ENCODE measurements at regions of chr9 and their contacts with region 1.

Region 1: DNA sequence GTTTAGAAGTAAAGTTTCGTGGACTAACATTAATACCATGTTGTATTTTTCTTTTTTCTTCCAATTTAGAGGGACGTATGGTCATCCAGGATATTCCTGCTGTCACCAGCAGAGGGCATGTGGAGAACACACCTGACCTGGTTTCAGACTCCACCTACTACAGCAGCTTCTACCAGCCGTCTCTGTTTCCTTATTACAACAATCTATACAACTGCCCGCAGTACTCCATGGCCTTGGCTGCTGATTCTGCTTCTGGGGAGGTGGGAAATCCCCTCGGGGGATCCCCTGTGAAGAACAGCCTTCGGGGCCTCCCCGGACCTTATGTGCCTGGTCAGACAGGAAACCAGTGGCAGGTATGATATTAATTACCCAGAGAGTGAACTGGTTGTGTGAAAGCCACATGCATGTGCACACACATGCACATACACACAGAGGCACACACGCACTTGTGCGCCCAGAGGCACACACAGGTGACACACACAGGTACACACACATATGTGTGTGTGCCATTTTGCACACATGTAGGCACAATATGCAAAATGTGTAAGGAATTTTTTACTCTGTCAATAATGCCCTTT is 52.4 kb downstream of the DMRT1 start:
- DNase-seq: peak in 5 of 6 donors; percentile 42 to 72 (median 62)
- ATAC-seq: peak; percentile 98 to 100 (median 99)
- H3K4me3 ChIP-seq: no peak overlapping the region
- H3K27ac ChIP-seq: no peak overlapping the region
- H3K4me1 ChIP-seq: peaks cover 0 to 3% (median 0%) of the 10 kb centered on the region in 3 donors
- H3K27me3 ChIP-seq: no peaks in the 10 kb centered on the region
- CTCF ChIP-seq: peak; percentile 47 to 73 (median 68)

Region 2: GRCh38 chr9:744790-745484 is 149.0 kb before region 1 on chr9:
- intact Hi-C with region 1: no loop called
- DNase-seq: peak; percentile 77 to 95 (median 92)
- ATAC-seq: peak; percentile 94 to 97 (median 96)
- H3K4me3 ChIP-seq: no peak overlapping the region
- H3K27ac ChIP-seq: peak overlapping the region; percentile 31 to 75 (median 60)
- H3K4me1 ChIP-seq: peaks cover 19 to 38% (median 27%) of the 10 kb centered on the region in 3 donors
- H3K27me3 ChIP-seq: no peaks in the 10 kb centered on the region
- CTCF ChIP-seq: no peak

Region 3: DNA sequence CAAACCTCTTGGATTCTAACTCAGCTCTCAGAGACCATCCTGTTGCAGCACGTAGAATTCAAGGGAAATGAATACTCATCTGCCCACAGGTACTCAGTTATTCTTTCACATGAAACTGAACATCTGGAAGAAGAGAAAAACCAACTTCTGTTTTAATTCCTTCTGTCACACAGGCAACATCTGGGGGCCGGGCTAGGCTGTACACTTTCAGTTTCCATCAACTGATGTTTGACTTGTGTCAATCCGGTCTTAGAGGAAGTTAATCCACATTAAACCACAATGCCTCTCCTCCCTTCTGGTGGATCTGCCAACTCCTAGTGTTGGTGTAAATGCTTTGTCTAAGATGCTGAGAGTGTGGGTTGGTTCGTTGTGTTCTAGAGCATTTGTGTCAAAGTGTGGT is 100.1 kb after region 1 on chr9:
- intact Hi-C with region 1: loop called in 1 of 3 experiments (anchors 10 kb)
- DNase-seq: no peak
- ATAC-seq: no peak
- H3K4me3 ChIP-seq: no peak overlapping the region
- H3K27ac ChIP-seq: no peak overlapping the region
- H3K4me1 ChIP-seq: no peaks in the 10 kb centered on the region
- H3K27me3 ChIP-seq: peaks cover 0 to 3% (median 0%) of the 10 kb centered on the region in 4 donors
- CTCF ChIP-seq: no peak

Region 4: DNA sequence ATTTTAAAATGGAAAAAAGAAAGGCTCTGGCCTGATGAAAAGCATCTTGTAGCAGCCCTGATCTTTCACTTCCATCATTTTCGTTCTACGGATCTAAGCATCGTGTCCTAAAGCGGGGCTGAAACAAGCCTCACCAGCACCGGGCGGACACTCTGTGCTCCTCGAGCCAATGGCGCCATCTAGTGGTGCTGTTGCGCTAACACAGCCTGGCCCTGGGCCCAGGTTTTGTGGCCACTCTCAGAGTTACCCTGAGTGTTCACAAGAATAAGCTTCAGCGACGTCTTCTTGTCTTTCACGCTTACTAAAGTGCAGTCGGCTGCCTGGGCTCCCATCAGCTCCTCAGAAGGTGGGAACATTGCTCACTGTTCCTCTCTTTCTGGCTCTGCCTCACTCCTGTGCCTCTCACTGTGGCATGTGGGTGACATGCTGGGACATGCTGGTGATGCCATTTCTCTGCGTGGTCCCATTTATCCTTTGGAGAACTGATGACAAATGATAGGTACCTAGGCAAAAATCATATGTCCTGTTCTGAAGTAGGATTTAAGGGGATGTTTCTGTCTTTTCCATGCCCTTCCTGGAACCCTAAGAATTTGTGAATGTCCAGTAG is 115.3 kb after region 1 on chr9:
- intact Hi-C with region 1: loop called in 2 of 3 experiments (anchors 5 to 10 kb)
- DNase-seq: peak; percentile 65 to 95 (median 89)
- ATAC-seq: peak; percentile 96 to 99 (median 98)
- H3K4me3 ChIP-seq: no peak overlapping the region
- H3K27ac ChIP-seq: no peak overlapping the region
- H3K4me1 ChIP-seq: no peaks in the 10 kb centered on the region
- H3K27me3 ChIP-seq: peaks cover 0 to 14% (median 6%) of the 10 kb centered on the region in 4 donors
- CTCF ChIP-seq: peak; percentile 97 to 99 (median 98)

Region 5: DNA sequence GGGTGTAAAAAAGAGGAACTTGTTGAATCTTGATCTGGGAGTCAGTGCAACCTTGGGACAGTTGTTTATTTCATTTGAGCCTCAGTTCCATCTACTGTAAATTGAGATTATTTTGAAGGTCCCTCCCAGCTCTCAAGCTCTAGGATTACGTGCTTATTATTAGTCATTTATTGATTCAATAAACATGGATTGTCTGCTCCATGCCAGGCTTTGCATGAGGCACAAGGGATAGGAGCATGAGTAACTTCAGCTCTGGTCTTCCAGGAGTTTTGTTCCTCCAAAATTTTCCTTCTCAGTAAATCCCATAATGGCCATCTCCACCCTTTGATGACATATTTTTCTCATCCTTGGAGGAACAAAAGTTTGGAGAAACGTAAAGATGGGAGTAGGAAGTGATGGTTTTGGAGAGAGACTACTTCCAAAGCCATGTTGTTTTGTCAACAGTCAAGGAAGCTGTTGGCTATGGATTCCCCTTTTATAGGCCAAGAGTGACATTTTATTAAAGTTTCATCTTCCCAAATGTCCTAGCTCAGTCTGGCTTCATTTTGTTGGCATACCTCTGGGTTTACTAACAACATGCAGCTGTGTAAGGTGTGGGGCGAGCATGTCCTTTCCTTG is 400.8 kb after region 1 on chr9:
- intact Hi-C with region 1: no loop called
- DNase-seq: no peak
- ATAC-seq: no peak
- H3K4me3 ChIP-seq: no peak overlapping the region
- H3K27ac ChIP-seq: no peak overlapping the region
- H3K4me1 ChIP-seq: no peaks in the 10 kb centered on the region
- H3K27me3 ChIP-seq: no peaks in the 10 kb centered on the region
- CTCF ChIP-seq: no peak